ENCODE measurements at regions of chr16 and their contacts with region 1.

Region 1: GRCh38 chr16:57422026-57422944 is 17.7 kb downstream of the CCL17 start:
- DNase-seq: no peak
- H3K4me3 ChIP-seq: no peak overlapping the region
- H3K4me3 Mint-ChIP-seq: no peak overlapping the region
- H3K27ac ChIP-seq: no peak overlapping the region
- H3K27ac Mint-ChIP-seq: peak overlapping the region in 1 of 7 donors; percentile 53
- H3K4me1 ChIP-seq: peaks cover 5% of the 10 kb centered on the region
- H3K4me1 Mint-ChIP-seq: peaks cover 5 to 16% (median 10%) of the 10 kb centered on the region in 4 donors
- H3K27me3 ChIP-seq: no peaks in the 10 kb centered on the region
- H3K27me3 Mint-ChIP-seq: no peaks in the 10 kb centered on the region

Region 2: DNA sequence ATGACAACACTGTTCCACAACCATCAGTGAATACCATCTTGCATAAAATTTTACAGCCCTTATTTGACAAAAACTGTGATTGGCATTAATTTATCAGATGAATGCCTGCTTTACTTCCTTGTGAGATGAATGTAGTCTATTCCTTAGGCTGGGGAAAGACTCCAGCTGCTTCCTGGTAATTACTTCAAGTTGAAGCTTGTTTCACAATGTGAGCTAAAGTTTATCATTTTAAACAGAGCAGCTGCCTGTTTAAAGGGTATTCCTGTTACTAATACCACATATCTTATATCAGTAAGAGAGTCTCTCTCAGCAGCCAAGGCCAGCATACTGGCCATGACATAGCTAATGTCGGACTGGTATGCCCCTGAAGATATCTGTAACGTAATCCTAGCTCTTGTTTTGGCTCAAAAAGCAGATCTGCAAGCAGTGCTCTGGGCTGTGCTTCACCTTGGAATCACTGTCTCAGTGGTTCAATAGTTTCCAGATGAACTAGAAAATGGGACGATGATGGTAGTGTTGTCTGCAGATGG is 190.4 kb before region 1 on chr16:
- CTCF ChIA-PET with region 1: no interaction called
- POLR2A ChIA-PET with region 1: no interaction called
- intact Hi-C with region 1: no loop called
- DNase-seq: no peak
- H3K4me3 ChIP-seq: no peak overlapping the region
- H3K4me3 Mint-ChIP-seq: no peak overlapping the region
- H3K27ac ChIP-seq: no peak overlapping the region
- H3K27ac Mint-ChIP-seq: no peak overlapping the region
- H3K4me1 ChIP-seq: no peaks in the 10 kb centered on the region
- H3K4me1 Mint-ChIP-seq: no peaks in the 10 kb centered on the region
- H3K27me3 ChIP-seq: no peaks in the 10 kb centered on the region
- H3K27me3 Mint-ChIP-seq: no peaks in the 10 kb centered on the region

Region 3: GRCh38 chr16:57432989-57433388 is 10.7 kb after region 1 on chr16:
- CTCF ChIA-PET with region 1: interaction called, 22 read pairs
- POLR2A ChIA-PET with region 1: no interaction called
- intact Hi-C with region 1: no loop called
- DNase-seq: no peak
- H3K4me3 ChIP-seq: no peak overlapping the region
- H3K4me3 Mint-ChIP-seq: no peak overlapping the region
- H3K27ac ChIP-seq: no peak overlapping the region
- H3K27ac Mint-ChIP-seq: peak overlapping the region in 2 of 7 donors; percentile 64 to 75
- H3K4me1 ChIP-seq: no peaks in the 10 kb centered on the region
- H3K4me1 Mint-ChIP-seq: peaks cover 0 to 3% (median 1%) of the 10 kb centered on the region in 4 donors
- H3K27me3 ChIP-seq: no peaks in the 10 kb centered on the region
- H3K27me3 Mint-ChIP-seq: no peaks in the 10 kb centered on the region

Measured in CD4-positive, alpha-beta memory T cell (primary cell).